Psoas muscle (tissue), 8 donors: ENCODE measurements at regions of chr3 and their contacts with region 1.

Region 1: GRCh38 chr3:115108614-115109013 is 38.5 kb downstream of the ZBTB20 start:
- DNase-seq: no peak
- ATAC-seq: peak in 3 of 4 donors; percentile 10 to 36 (median 29)
- H3K4me3 ChIP-seq: peak overlapping the region; percentile 58
- H3K27ac ChIP-seq: peak overlapping the region; percentile 76
- H3K4me1 ChIP-seq: peaks cover 20% of the 10 kb centered on the region
- H3K27me3 ChIP-seq: no peaks in the 10 kb centered on the region
- CTCF ChIP-seq: no peak

Region 2: GRCh38 chr3:115141033-115141757 is 32.6 kb after region 1 on chr3:
- intact Hi-C with region 1: loop called (anchors 2 to 5 kb)
- DNase-seq: no peak
- ATAC-seq: no peak
- H3K4me3 ChIP-seq: no peak overlapping the region
- H3K27ac ChIP-seq: no peak overlapping the region
- H3K4me1 ChIP-seq: peaks cover 56% of the 10 kb centered on the region
- H3K27me3 ChIP-seq: no peaks in the 10 kb centered on the region
- CTCF ChIP-seq: no peak